Ascending aorta (tissue), 2 donors: ENCODE measurements at regions of chr11 and their contacts with region 1.

Region 1: GRCh38 chr11:21924262-21924661 is 268.6 kb upstream of the ANO5 start:
- DNase-seq: no peak
- H3K4me3 ChIP-seq: no peak overlapping the region
- H3K27ac ChIP-seq: no peak overlapping the region
- H3K4me1 ChIP-seq: no peaks in the 10 kb centered on the region
- H3K27me3 ChIP-seq: no peaks in the 10 kb centered on the region
- CTCF ChIP-seq: no peak

Region 2: GRCh38 chr11:21711341-21711740 is 212.9 kb before region 1 on chr11:
- intact Hi-C with region 1: no loop called
- DNase-seq: no peak
- H3K4me3 ChIP-seq: no peak overlapping the region
- H3K27ac ChIP-seq: no peak overlapping the region
- H3K4me1 ChIP-seq: no peaks in the 10 kb centered on the region
- H3K27me3 ChIP-seq: no peaks in the 10 kb centered on the region
- CTCF ChIP-seq: no peak

Region 3: DNA sequence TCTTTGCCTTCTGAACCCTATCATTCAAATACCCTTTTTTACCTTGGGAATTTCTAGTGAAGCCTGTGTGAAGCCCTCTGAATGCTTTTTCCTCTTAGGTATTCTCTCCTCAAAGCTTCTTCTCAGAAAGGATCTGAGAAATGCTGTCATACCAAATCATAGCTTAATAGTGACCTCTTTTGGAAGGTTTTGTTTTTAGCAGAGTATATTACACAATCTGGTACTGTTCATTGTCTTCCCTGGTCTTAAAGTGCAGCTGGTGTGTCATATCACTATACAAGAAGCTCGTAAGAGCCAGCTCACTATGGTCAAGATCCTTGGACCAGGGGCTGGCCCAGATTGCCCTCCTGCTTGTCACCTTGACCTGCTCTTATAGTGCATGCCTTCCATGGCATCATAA is 64.2 kb after region 1 on chr11:
- intact Hi-C with region 1: loop called (anchors 2 kb)
- DNase-seq: no peak
- H3K4me3 ChIP-seq: no peak overlapping the region
- H3K27ac ChIP-seq: no peak overlapping the region
- H3K4me1 ChIP-seq: no peaks in the 10 kb centered on the region
- H3K27me3 ChIP-seq: no peaks in the 10 kb centered on the region
- CTCF ChIP-seq: peak in 1 of 3 experiments; percentile 39